ENCODE measurements at regions of chr13 and their contacts with region 1.

Region 1: GRCh38 chr13:52011632-52012511 is at the start of gene ALG11:
- DNase-seq: peak; percentile 99 to 100 (median 99)
- ATAC-seq: peak; percentile 98
- H3K4me3 ChIP-seq: peak within 1 kb of the TSS; percentile 93
- H3K4me3 Mint-ChIP-seq: peak within 1 kb of the TSS; percentile 92
- H3K27ac ChIP-seq: peak within 1 kb of the TSS in 1 of 2 donors; percentile 56
- H3K27ac Mint-ChIP-seq: peak within 1 kb of the TSS; percentile 84
- H3K4me1 ChIP-seq: peaks cover 9% of the 10 kb centered on the region
- H3K4me1 Mint-ChIP-seq: peaks cover 24% of the 10 kb centered on the region
- H3K27me3 ChIP-seq: peaks cover 2 to 24% of the 10 kb centered on the region in 2 experiments
- H3K27me3 Mint-ChIP-seq: peaks cover 12% of the 10 kb centered on the region
- CTCF ChIP-seq: no peak
- total RNA-seq, gene ALG11: 25.8 to 29.8 TPM

Region 2: GRCh38 chr13:51803422-51804294 is 208.2 kb before region 1 on chr13 and contains the start of gene DHRS12:
- CTCF ChIA-PET with region 1: no interaction called
- POLR2A ChIA-PET with region 1: no interaction called
- intact Hi-C with region 1: loop called (anchors 2 to 5 kb)
- DNase-seq: peak; percentile 75 to 97 (median 82)
- ATAC-seq: peak; percentile 73
- H3K4me3 ChIP-seq: peak within 1 kb of the TSS; percentile 81
- H3K4me3 Mint-ChIP-seq: peak within 1 kb of the TSS; percentile 97
- H3K27ac ChIP-seq: peak within 1 kb of the TSS; percentile 99
- H3K27ac Mint-ChIP-seq: peak within 1 kb of the TSS; percentile 99
- H3K4me1 ChIP-seq: peaks cover 58% of the 10 kb centered on the region
- H3K4me1 Mint-ChIP-seq: peaks cover 61% of the 10 kb centered on the region
- H3K27me3 ChIP-seq: no peaks in the 10 kb centered on the region
- H3K27me3 Mint-ChIP-seq: no peaks in the 10 kb centered on the region
- CTCF ChIP-seq: no peak
- total RNA-seq, gene DHRS12: 10.0 to 14.8 TPM

Region 3: DNA sequence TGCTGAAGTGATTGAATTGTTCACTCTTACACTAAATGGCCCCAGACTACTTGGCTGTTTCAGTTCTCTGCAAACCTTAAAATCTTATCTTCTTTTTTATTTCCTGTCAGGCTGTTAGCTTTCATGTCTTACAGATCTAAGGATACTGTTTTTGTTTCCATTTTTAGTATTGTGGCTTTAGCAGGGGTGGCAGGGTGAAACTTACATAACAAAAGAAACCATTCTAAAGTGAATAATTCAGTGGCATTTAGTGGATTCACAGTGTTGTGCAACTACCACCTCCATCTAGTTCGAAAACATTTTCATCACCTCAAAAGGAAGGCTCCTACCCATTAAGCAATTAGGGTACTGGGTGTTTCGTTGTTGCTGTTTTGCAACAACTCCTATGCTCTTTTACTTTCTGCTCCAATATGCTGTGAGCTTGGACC is 186.7 kb before region 1 on chr13:
- CTCF ChIA-PET with region 1: no interaction called
- POLR2A ChIA-PET with region 1: interaction called, 6 read pairs
- intact Hi-C with region 1: loop called in 1 of 2 experiments (anchors 5 kb)
- DNase-seq: peak in 4 of 14 experiments; percentile 39 to 85 (median 76)
- ATAC-seq: peak; percentile 58
- H3K4me3 ChIP-seq: peak overlapping the region; percentile 54
- H3K4me3 Mint-ChIP-seq: peak overlapping the region; percentile 86
- H3K27ac ChIP-seq: peak overlapping the region; percentile 76 to 79
- H3K27ac Mint-ChIP-seq: peak overlapping the region; percentile 89
- H3K4me1 ChIP-seq: peaks cover 78% of the 10 kb centered on the region
- H3K4me1 Mint-ChIP-seq: peaks cover 88% of the 10 kb centered on the region
- H3K27me3 ChIP-seq: no peaks in the 10 kb centered on the region
- H3K27me3 Mint-ChIP-seq: no peaks in the 10 kb centered on the region
- CTCF ChIP-seq: no peak

Region 4: DNA sequence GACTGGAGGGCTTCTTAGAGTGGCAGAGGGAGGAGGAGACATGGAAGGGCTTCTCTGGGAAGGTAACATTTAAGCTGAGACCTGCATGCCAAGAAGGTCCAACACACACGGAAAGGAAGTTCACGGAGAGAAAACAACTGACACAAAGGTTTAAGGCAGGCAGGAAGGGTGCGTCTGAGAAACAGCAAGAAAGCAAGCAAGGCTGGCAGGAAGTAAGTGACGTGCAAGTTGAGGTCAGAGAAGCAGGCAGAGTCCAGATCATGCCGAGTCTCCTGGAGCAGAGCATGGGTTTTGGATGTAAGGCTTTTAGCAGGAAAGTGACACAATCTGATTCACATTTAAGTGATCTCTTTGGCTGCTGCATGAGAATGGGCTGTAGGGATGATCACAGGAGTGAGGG is 61.1 kb before region 1 on chr13:
- CTCF ChIA-PET with region 1: no interaction called
- POLR2A ChIA-PET with region 1: no interaction called
- intact Hi-C with region 1: loop called in 1 of 2 experiments (anchors 5 kb)
- DNase-seq: peak in 7 of 14 experiments; percentile 5 to 82 (median 45)
- ATAC-seq: peak; percentile 93
- H3K4me3 ChIP-seq: no peak overlapping the region
- H3K4me3 Mint-ChIP-seq: peak overlapping the region; percentile 8
- H3K27ac ChIP-seq: peak overlapping the region; percentile 1 to 42
- H3K27ac Mint-ChIP-seq: peak overlapping the region; percentile 78
- H3K4me1 ChIP-seq: peaks cover 50% of the 10 kb centered on the region
- H3K4me1 Mint-ChIP-seq: peaks cover 48% of the 10 kb centered on the region
- H3K27me3 ChIP-seq: no peaks in the 10 kb centered on the region
- H3K27me3 Mint-ChIP-seq: no peaks in the 10 kb centered on the region
- CTCF ChIP-seq: no peak

Region 5: GRCh38 chr13:52617070-52618060 is 605.5 kb after region 1 on chr13:
- CTCF ChIA-PET with region 1: no interaction called
- POLR2A ChIA-PET with region 1: no interaction called
- intact Hi-C with region 1: loop called in 1 of 2 experiments (anchors 10 kb)
- DNase-seq: peak; percentile 73 to 90 (median 81)
- ATAC-seq: peak; percentile 93
- H3K4me3 ChIP-seq: peak overlapping the region; percentile 81
- H3K4me3 Mint-ChIP-seq: peak overlapping the region; percentile 96
- H3K27ac ChIP-seq: peak overlapping the region; percentile 55 to 76
- H3K27ac Mint-ChIP-seq: peak overlapping the region; percentile 86
- H3K4me1 ChIP-seq: peaks cover 28% of the 10 kb centered on the region
- H3K4me1 Mint-ChIP-seq: peaks cover 42% of the 10 kb centered on the region
- H3K27me3 ChIP-seq: no peaks in the 10 kb centered on the region
- H3K27me3 Mint-ChIP-seq: no peaks in the 10 kb centered on the region
- CTCF ChIP-seq: no peak